Endothelial cell of umbilical vein (primary cell): ENCODE measurements at regions of chr7 and their contacts with region 1.

Region 1: GRCh38 chr7:129006636-129007414 is 48.1 kb downstream of the TNPO3 start:
- DNase-seq: no peak
- H3K4me3 ChIP-seq: no peak overlapping the region
- H3K27ac ChIP-seq: no peak overlapping the region
- H3K4me1 ChIP-seq: no peaks in the 10 kb centered on the region
- H3K27me3 ChIP-seq: no peaks in the 10 kb centered on the region
- CTCF ChIP-seq: no peak
- POLR2A ChIP-seq: no peak

Region 2: DNA sequence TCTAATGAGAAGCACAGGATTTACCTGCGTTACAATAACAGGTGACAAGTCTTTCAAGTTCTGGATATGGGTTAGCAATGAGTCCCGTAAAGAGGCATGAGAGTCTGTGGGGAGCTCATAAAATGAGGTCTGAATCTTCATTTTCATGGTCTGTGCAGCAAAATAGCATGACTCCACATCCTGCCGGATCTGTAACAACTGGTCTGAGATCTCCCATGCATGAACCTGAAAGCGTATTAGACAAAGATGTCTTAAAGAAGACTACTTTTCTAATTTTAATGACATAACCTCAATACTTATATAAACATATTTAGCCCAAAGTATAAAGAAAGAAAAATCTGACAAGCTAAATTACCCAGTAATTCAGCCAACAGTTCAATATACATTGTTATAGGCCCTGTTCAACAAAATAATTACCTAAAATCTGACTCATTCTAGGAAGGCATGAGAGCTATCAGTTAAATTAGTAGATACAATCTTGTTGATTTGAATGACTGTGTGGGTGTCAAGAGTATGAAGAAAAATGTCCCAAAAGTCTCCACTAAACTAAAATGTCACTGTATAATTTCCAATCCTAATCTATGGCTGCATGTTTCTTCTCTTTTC is 11.2 kb after region 1 on chr7:
- CTCF ChIA-PET with region 1: interaction called, 16 read pairs
- POLR2A ChIA-PET with region 1: no interaction called
- dilution Hi-C with region 1: no loop called
- intact Hi-C with region 1: no loop called
- DNase-seq: no peak
- H3K4me3 ChIP-seq: no peak overlapping the region
- H3K27ac ChIP-seq: no peak overlapping the region
- H3K4me1 ChIP-seq: no peaks in the 10 kb centered on the region
- H3K27me3 ChIP-seq: no peaks in the 10 kb centered on the region
- CTCF ChIP-seq: no peak
- POLR2A ChIP-seq: no peak